ENCODE measurements at regions of chr3 and their contacts with region 1.

Region 1: GRCh38 chr3:150870396-150870795 is 34.8 kb downstream of the MINDY4B start:
- DNase-seq: no peak
- ATAC-seq: no peak
- H3K4me3 ChIP-seq: no peak overlapping the region
- H3K27ac ChIP-seq: no peak overlapping the region
- H3K4me1 ChIP-seq: no peaks in the 10 kb centered on the region
- H3K27me3 ChIP-seq: no peaks in the 10 kb centered on the region
- CTCF ChIP-seq: no peak
- EP300 ChIP-seq: no peak
- POLR2A ChIP-seq: no peak
- RAD21 ChIP-seq: no peak

Region 2: GRCh38 chr3:150528354-150528797 is 342.0 kb before region 1 on chr3:
- CTCF ChIA-PET with region 1: interaction called, 3 read pairs
- POLR2A ChIA-PET with region 1: no interaction called
- RAD21 ChIA-PET with region 1: interaction called, 3 read pairs
- SMC1A ChIA-PET with region 1: no interaction called
- in situ Hi-C with region 1: no loop called
- intact Hi-C with region 1: loop called (anchors 2 kb)
- DNase-seq: no peak
- ATAC-seq: peak; percentile 54
- H3K4me3 ChIP-seq: no peak overlapping the region
- H3K27ac ChIP-seq: no peak overlapping the region
- H3K4me1 ChIP-seq: no peaks in the 10 kb centered on the region
- H3K27me3 ChIP-seq: no peaks in the 10 kb centered on the region
- CTCF ChIP-seq: peak; percentile 13 to 48 (median 33); a peak in 4 of 6 replicates
- EP300 ChIP-seq: no peak
- POLR2A ChIP-seq: no peak
- RAD21 ChIP-seq: peak; percentile 48

Region 3: DNA sequence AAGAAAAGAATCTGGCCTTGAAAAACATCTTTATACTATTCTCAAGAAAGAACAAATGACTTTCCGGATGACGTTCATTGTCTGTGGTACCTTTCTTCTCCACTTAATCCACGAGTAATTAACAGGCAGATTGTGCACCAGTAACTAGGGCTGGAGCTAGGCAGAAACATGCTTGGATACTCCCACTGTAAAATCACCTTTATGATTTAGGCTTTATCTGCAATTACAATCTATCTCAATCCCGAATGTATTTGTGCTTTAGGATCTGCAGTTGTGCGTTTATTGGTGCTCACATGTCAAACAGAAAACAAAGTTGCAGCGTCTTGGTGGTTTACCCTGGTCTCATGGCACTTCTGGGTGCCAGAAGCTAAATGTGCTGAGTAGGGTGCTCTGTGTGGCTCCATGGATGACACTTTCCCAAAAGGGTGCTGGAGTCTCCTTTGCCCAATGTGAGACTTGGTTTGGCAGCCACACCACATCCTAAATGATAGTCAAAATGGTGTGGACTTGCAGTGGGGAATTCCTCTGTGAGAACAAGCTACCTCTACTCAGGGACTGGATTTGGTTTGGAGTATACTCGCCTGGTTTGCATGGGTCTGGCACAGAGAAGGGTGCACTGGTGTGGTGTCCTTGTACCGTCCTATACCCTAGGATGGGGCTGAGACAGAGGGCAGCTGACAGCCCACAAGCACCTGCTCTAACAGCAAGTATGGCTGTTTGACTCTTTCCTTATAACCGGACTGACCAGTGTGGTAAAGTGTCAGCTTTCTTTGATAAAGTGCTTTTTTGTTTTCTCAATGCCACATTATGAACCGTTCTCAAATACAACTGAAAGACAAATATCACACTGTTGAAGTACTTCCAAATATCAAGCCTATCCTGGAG is 331.8 kb before region 1 on chr3:
- CTCF ChIA-PET with region 1: interaction called, 3 read pairs
- POLR2A ChIA-PET with region 1: no interaction called
- RAD21 ChIA-PET with region 1: no interaction called
- SMC1A ChIA-PET with region 1: no interaction called
- in situ Hi-C with region 1: loop called (anchors 5 kb)
- intact Hi-C with region 1: no loop called
- DNase-seq: no peak
- ATAC-seq: peak; percentile 12; the same call in 2 of the 3 replicates
- H3K4me3 ChIP-seq: no peak overlapping the region
- H3K27ac ChIP-seq: no peak overlapping the region
- H3K4me1 ChIP-seq: no peaks in the 10 kb centered on the region
- H3K27me3 ChIP-seq: no peaks in the 10 kb centered on the region
- CTCF ChIP-seq: no peak
- EP300 ChIP-seq: no peak
- POLR2A ChIP-seq: peak; percentile 56; the same call in 1 of the 2 replicates
- RAD21 ChIP-seq: no peak

Region 4: DNA sequence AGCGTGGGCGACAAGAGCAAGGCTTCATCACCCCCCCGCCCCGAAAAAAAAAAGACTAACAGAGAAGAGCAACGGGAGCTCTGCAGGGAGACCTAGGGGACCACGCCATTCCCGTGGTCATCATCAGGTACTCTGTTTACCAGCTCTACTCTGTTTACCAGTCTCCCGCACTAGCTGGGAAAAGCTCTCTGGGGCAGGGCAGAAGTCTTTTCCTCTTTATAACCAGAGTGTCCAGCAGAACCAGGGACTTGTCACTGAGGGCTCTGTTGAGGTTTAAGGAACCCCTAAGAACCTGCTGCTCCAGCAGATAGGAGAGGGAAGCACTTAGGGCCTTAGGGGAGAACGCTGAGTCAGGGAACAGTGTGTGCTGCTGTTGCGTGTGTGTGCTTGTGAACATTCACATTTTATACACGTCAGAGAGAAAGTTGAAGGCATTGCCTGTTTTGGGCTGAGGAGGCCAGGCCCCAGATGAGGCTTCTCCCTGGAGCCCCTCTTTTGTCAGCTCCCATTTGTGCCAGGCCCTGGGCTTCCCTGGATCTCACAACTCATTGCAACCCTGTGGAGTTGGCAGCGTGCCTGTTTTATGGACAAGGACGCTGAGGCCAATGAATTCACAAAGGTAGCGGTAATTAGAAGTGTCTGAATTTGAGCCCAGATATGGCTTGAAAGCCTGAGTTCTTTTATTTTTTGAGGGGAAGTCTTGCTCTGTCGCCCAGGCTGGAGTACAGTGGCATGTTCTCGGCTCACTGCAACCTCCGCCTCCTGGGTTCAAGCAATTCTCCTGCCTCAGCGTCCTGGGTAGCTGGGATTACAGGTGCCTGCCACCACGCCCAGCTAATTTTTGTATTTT is 142.5 kb before region 1 on chr3:
- CTCF ChIA-PET with region 1: interaction called, 29 read pairs
- POLR2A ChIA-PET with region 1: no interaction called
- RAD21 ChIA-PET with region 1: interaction called, 23 read pairs
- SMC1A ChIA-PET with region 1: interaction called, 13 read pairs
- in situ Hi-C with region 1: loop called (anchors 5 kb)
- intact Hi-C with region 1: no loop called
- DNase-seq: no peak
- ATAC-seq: no peak
- H3K4me3 ChIP-seq: no peak overlapping the region
- H3K27ac ChIP-seq: no peak overlapping the region
- H3K4me1 ChIP-seq: no peaks in the 10 kb centered on the region
- H3K27me3 ChIP-seq: no peaks in the 10 kb centered on the region
- CTCF ChIP-seq: no peak
- EP300 ChIP-seq: no peak
- POLR2A ChIP-seq: no peak
- RAD21 ChIP-seq: no peak

Region 5: GRCh38 chr3:150840802-150841515 is 29.4 kb before region 1 on chr3:
- CTCF ChIA-PET with region 1: no interaction called
- POLR2A ChIA-PET with region 1: no interaction called
- RAD21 ChIA-PET with region 1: no interaction called
- SMC1A ChIA-PET with region 1: no interaction called
- in situ Hi-C with region 1: no loop called
- intact Hi-C with region 1: no loop called
- DNase-seq: no peak
- ATAC-seq: no peak
- H3K4me3 ChIP-seq: no peak overlapping the region
- H3K27ac ChIP-seq: no peak overlapping the region
- H3K4me1 ChIP-seq: no peaks in the 10 kb centered on the region
- H3K27me3 ChIP-seq: peaks cover 0 to 3% of the 10 kb centered on the region in 2 experiments; a peak in 1 of 4 replicates
- CTCF ChIP-seq: peak in 2 of 3 experiments; percentile 12 to 17; a peak in 1 of 6 replicates
- EP300 ChIP-seq: no peak
- POLR2A ChIP-seq: no peak
- RAD21 ChIP-seq: no peak